ENCODE measurements at regions of chr1 and their contacts with region 1.

Region 1: GRCh38 chr1:193185901-193186731 is at the start of gene B3GALT2:
- DNase-seq: no peak
- ATAC-seq: peak; percentile 75
- total RNA-seq, gene B3GALT2: 78.4 TPM

Region 2: DNA sequence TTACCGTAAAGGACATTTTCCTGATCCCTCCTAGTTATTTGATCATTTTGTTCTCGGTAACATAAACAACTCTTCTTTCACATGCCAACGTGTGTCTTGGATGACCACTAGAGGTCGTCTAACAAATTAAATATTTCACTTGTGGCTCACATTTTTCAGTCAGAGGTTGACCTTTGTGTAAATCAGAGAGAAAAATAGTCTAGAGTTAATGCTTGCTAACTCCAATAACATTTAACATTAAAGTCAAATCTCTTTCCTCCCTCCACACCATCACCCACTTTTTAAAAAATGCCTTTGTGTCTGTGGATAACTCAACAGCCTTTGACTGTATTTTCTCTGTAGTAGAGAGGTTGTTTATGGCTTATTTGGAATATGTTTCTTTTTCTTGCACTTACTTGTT is 220.8 kb after region 1 on chr1:
- intact Hi-C with region 1: loop called (anchors 5 kb)
- DNase-seq: no peak
- ATAC-seq: peak; percentile 45

Region 3: GRCh38 chr1:194069168-194069830 is 883.2 kb after region 1 on chr1:
- intact Hi-C with region 1: loop called (anchors 5 kb)
- DNase-seq: peak; percentile 85
- ATAC-seq: peak; percentile 93